ENCODE measurements at regions of chr5 and their contacts with region 1.

Region 1: GRCh38 chr5:168282120-168282519 is 9.3 kb upstream of the WWC1 start:
- DNase-seq: no peak
- ATAC-seq: no peak
- H3K4me3 ChIP-seq: no peak overlapping the region
- H3K4me3 Mint-ChIP-seq: no peak overlapping the region
- H3K27ac ChIP-seq: no peak overlapping the region
- H3K27ac Mint-ChIP-seq: no peak overlapping the region
- H3K4me1 ChIP-seq: no peaks in the 10 kb centered on the region
- H3K4me1 Mint-ChIP-seq: peaks cover 0 to 2% (median 0%) of the 10 kb centered on the region in 3 donors
- H3K27me3 ChIP-seq: peaks cover 0 to 14% of the 10 kb centered on the region in 2 experiments
- H3K27me3 Mint-ChIP-seq: peaks cover 19% of the 10 kb centered on the region in 2 donors

Region 2: DNA sequence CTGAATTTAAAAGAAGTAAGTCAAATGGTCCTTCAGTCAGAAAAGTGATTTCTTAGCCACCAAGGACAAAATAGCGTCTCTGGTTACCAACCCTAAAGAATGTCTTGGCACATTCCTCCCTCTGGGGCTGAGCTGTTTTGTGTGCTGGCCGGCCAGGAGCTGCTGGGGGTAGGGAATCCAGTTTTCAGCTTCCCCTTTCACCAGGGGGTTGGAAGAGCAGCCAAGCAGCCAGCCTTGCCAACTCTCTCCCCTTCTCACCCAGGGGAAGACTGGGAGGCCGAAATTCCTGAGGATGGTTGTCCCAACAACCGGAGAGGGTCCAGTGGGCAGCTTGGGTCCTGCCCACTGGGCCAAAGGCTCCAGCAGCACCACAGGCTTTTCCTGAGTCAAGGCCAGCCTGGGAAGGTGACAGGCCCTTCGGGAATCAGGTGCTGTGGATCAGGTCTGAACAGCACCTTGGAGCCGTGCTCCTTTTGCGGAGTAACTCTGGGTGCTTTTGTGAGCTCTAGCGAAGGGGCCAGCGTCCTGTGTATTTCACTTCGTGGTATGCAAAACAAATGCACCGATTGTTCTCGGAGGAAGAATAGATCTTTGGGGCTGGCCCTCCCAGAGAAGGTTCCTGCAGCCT is 13.6 kb after region 1 on chr5:
- CTCF ChIA-PET with region 1: no interaction called
- POLR2A ChIA-PET with region 1: no interaction called
- DNase-seq: no peak
- ATAC-seq: no peak
- H3K4me3 ChIP-seq: no peak overlapping the region
- H3K4me3 Mint-ChIP-seq: no peak overlapping the region
- H3K27ac ChIP-seq: no peak overlapping the region
- H3K27ac Mint-ChIP-seq: no peak overlapping the region
- H3K4me1 ChIP-seq: peaks cover 0 to 13% of the 10 kb centered on the region in 2 experiments
- H3K4me1 Mint-ChIP-seq: peaks cover 0 to 14% (median 13%) of the 10 kb centered on the region in 3 donors
- H3K27me3 ChIP-seq: peaks cover 5 to 39% of the 10 kb centered on the region in 2 experiments
- H3K27me3 Mint-ChIP-seq: peaks cover 17 to 32% of the 10 kb centered on the region in 2 donors

Region 3: DNA sequence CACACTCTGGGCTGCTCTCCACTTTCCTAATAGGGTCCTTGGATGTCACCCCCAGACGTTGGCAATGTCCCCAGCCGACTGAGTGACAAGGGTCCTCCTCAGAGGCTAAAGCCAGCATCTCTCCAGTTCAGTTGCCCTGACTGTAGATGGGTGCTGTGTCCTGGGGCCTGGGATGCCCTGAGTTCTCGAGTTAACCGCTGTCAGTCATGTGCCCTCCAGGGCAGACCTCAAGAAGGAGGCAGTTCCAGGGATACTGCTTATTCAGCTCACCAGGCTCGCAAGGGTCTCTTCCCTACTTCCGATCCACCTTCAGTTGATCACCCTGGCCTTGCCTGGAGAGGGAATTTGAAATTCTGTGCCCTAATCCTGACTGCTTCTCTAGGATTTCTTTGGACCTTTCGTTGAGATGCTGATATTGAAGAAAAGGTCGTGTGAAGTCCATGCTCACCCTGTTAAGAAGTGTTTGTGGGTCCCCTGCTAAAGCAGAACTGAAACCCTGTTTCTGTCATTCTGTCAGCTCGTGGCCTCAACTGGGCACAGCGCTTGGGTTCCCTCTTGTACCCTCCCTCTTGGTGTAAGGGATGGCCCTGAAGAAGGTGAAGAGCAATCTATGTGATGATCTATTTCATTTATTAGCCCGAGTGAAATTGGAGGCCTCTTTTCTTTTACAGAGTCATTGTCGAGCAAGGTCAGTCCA is 65.1 kb after region 1 on chr5:
- CTCF ChIA-PET with region 1: interaction called in 1 of 2 experiments, 10 read pairs
- POLR2A ChIA-PET with region 1: no interaction called
- DNase-seq: no peak
- ATAC-seq: no peak
- H3K4me3 ChIP-seq: no peak overlapping the region
- H3K4me3 Mint-ChIP-seq: no peak overlapping the region
- H3K27ac ChIP-seq: no peak overlapping the region
- H3K27ac Mint-ChIP-seq: no peak overlapping the region
- H3K4me1 ChIP-seq: no peaks in the 10 kb centered on the region
- H3K4me1 Mint-ChIP-seq: no peaks in the 10 kb centered on the region
- H3K27me3 ChIP-seq: peaks cover 0 to 13% of the 10 kb centered on the region in 2 experiments
- H3K27me3 Mint-ChIP-seq: peaks cover 3 to 17% of the 10 kb centered on the region in 2 donors

Region 4: DNA sequence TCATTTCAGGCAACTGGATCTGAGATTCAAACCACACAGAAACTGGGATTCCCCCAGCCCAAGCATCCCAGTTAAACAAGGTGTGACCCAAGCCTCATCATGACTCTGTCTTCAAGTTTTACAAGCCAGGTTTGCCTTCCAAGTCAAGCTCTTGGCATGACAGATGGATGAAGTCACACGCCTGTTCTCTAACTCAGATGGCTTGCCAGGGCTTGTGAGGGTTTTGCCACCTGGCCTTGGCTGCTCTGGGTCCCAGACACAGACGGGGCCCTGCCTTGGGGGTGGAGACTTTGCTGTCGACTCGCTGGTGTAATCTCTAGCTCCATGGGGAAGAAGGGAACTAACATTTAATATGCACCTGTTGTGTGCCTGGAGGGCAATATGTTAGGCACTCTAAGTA is 108.4 kb after region 1 on chr5:
- CTCF ChIA-PET with region 1: no interaction called
- POLR2A ChIA-PET with region 1: no interaction called
- DNase-seq: no peak
- ATAC-seq: no peak
- H3K4me3 ChIP-seq: no peak overlapping the region
- H3K4me3 Mint-ChIP-seq: no peak overlapping the region
- H3K27ac ChIP-seq: no peak overlapping the region
- H3K27ac Mint-ChIP-seq: no peak overlapping the region
- H3K4me1 ChIP-seq: no peaks in the 10 kb centered on the region
- H3K4me1 Mint-ChIP-seq: no peaks in the 10 kb centered on the region
- H3K27me3 ChIP-seq: peaks cover 0 to 2% of the 10 kb centered on the region in 2 experiments
- H3K27me3 Mint-ChIP-seq: peaks cover 2 to 5% of the 10 kb centered on the region in 2 donors